Activated T-helper 2 cell treated with anti-CD3 and anti-CD28 coated beads, Interferon-gamma antibody, Interleukin-2, Interleukin-4, amounts not matched to agents 10 μg/mL and 5 μg/mL and 100 μg/mL, durations not matched to agents 14 hours and 24 hours and 36 hours (primary cell): ENCODE measurements at regions of chr21 and their contacts with region 1.

Region 1: GRCh38 chr21:32257962-32258785 is 20.7 kb downstream of the MIS18A start:
- DNase-seq: no peak
- H3K4me3 Mint-ChIP-seq: no peak overlapping the region
- H3K27ac Mint-ChIP-seq: no peak overlapping the region
- H3K4me1 Mint-ChIP-seq: no peaks in the 10 kb centered on the region
- H3K27me3 Mint-ChIP-seq: no peaks in the 10 kb centered on the region

Region 2: DNA sequence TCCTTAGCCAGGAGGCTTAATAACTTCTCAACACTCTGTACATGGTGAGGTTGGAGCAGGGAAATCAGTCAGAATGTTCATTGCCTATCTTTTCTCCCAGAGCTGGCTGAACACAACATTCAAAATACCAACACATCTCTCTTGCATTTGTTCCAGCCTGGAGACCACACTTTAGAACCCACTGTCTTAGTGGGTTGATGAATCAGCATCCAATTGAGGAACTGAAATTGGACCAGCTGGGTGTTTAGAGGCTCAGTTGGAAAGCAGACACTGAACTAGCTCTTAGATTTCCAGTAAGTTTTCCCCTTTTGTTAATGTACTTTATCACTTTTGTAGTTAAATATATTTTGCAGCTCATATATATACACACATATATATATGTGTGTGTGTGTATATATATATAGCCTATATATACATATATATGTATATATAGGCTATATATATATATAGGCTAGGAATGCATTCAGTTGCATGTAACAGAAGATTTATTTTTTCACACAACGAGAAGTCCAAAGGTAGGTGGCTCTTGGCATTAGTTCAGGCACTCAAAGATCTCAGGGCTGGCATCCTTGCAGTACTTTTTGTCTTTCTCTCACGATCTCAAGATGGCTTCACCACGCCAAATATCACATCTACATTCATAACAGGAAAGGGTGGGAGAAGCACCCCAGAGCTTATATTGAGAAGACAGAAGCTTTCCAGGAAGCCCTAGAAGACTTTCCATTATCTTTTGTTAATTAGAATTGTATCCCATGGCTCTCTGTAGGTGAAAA is 420.4 kb before region 1 on chr21:
- intact Hi-C with region 1: no loop called
- DNase-seq: no peak
- H3K4me3 Mint-ChIP-seq: no peak overlapping the region
- H3K27ac Mint-ChIP-seq: no peak overlapping the region
- H3K4me1 Mint-ChIP-seq: no peaks in the 10 kb centered on the region
- H3K27me3 Mint-ChIP-seq: peaks cover 3% of the 10 kb centered on the region

Region 3: DNA sequence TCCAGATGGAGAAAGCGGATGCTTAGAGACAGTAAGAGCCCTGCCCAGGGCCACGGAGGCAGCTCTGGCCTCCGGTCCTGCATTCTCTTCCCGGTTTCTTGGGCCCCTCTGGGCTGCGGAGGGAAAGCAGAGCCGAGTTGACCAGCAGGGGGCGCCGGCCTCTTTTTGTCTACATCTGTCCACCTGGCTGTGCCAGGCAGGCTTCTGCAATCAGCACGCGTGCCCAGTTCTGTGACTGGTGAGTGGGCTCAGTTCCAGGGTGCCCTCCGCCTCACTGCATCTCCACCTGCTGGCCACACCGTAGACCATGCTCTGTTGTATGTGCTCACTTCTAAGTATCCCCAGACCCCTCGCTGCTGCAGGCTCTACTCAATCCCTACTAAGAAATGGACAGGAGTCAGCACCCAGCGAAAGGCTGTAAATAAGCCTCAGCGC is 392.1 kb before region 1 on chr21:
- intact Hi-C with region 1: loop called (anchors 1 kb)
- DNase-seq: peak; percentile 43
- H3K4me3 Mint-ChIP-seq: no peak overlapping the region
- H3K27ac Mint-ChIP-seq: no peak overlapping the region
- H3K4me1 Mint-ChIP-seq: no peaks in the 10 kb centered on the region
- H3K27me3 Mint-ChIP-seq: peaks cover 19% of the 10 kb centered on the region

Region 4: DNA sequence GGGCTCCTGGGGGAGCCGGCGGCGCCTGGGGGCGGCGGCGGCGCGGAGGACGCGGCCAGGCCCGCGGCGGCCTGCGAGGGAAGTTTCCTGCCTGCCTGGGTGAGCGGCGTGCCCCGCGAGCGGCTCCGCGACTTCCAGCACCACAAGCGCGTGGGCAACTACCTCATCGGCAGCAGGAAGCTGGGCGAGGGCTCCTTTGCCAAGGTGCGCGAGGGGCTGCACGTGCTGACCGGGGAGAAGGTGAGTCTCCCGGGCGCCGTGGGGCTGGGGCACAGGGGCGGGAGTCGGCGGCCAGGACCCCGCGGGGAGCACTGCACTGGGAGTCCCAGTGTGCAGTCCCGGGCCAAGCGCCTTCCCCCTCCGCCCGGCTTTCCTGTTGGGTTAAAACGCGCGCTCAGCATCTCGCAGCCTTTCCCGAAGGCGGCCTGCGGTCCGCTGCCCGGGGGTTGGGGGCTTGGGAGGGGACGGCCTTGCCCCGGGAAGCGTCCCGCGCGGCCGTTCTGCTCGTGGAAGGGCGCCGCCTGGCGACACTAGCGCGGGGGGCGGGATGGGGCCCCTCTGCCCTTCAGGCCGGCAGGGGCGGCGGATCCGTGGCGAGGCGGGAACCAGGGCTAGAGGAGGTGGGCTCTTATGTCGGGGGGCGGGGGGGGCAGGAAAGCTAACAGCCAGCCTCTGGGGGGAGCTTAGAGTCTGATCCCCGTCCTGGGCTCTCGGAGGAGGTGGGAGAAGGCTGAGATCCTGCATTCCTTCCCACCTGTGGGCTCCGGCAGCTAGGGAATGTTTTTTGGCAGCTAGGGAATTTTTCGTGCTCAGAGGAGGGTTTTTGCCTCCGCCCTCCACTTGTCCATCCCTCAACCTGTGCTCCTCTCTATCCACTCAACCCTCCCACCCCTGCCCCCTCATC is 384.2 kb before region 1 on chr21:
- intact Hi-C with region 1: loop called (anchors 2 kb)
- DNase-seq: peak; percentile 17
- H3K4me3 Mint-ChIP-seq: peak overlapping the region; percentile 21
- H3K27ac Mint-ChIP-seq: no peak overlapping the region
- H3K4me1 Mint-ChIP-seq: peaks cover 5% of the 10 kb centered on the region
- H3K27me3 Mint-ChIP-seq: peaks cover 53% of the 10 kb centered on the region

Region 5: DNA sequence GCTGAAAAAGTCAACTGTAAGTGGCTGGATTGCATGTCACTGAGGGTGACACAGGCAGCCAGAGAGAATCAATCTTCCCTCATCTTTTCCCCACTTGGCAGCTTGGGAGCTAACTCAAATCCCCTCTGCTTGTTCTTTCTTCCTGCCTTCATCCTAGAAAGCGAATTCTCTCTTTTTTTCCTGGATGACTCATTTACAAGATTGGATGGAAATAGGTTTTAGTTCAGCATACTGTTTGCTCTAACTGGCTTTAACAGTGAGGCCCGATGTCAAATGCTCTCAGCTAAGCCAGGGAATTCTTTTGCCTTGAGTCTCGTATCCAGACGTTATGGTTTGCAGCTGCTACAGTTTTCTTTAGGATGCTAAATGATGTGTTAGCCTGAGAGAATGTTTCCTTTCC is 312.6 kb before region 1 on chr21:
- intact Hi-C with region 1: no loop called
- DNase-seq: no peak
- H3K4me3 Mint-ChIP-seq: no peak overlapping the region
- H3K27ac Mint-ChIP-seq: no peak overlapping the region
- H3K4me1 Mint-ChIP-seq: no peaks in the 10 kb centered on the region
- H3K27me3 Mint-ChIP-seq: no peaks in the 10 kb centered on the region